ENCODE measurements at regions of chr17 and their contacts with region 1.

Region 1: DNA sequence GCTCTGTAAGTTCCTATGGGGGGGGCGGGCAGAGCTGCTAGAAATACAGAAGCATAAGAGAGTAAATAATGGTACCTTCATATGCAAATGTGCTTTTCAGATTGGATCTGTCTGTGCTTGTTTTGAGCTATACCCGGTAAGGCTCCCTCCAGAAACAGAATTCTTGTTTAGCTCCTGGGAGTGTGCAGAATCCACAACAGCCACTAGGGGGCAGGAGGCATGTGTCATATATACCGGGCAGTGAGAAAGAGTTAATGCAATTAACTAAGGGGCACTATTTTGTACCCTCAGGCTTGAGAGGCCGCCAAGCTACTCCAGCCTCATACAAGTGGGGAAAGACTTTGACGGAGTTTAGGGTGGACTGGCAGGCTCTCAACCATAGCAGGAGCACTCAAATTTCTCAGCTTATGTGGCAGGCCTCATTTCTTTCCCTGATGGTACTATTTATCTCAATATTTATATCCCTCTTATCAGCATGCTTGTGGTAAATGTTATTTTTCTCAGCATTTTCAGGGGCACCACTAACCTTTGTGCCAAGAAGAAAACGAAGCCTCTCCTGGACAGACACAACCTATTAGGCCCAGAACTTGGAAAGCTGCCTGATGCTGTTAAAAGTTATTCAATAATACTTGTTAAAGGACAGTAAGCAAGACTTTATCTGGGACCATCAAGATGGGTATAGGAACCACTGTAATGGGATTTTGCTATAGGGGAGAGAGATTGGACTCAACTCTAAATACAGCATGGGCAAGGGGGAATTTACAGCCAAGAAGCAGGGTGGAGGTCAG is 10.7 kb upstream of the CENPV start:
- DNase-seq: peak; percentile 86
- ATAC-seq: peak; percentile 96
- H3K4me3 Mint-ChIP-seq: no peak overlapping the region
- H3K27ac Mint-ChIP-seq: no peak overlapping the region
- H3K4me1 Mint-ChIP-seq: peaks cover 7% of the 10 kb centered on the region
- H3K27me3 Mint-ChIP-seq: peaks cover 2% of the 10 kb centered on the region

Region 2: DNA sequence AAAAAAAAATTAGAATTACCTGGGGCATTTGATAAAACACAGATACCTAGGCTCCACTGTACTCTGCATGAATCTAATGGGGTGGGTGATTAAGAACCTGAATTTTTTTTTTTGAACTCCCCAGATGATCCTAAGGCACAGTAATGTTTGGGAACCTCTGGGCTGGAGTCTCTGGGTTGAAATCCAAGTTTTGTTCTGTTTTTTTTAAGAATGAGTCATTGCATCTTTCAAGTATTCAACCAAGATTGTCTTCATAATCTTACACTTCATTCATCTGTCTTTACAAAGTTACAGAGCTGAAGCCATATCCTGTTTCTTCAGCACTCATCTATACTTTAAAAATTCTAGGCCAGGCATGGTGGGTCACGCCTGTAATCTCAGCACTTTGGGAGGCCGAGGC is 94.3 kb before region 1 on chr17:
- CTCF ChIA-PET with region 1: no interaction called
- DNase-seq: no peak
- ATAC-seq: no peak
- H3K4me3 Mint-ChIP-seq: no peak overlapping the region
- H3K27ac Mint-ChIP-seq: peak overlapping the region; percentile 18
- H3K4me1 Mint-ChIP-seq: peaks cover 22% of the 10 kb centered on the region
- H3K27me3 Mint-ChIP-seq: no peaks in the 10 kb centered on the region

Region 3: DNA sequence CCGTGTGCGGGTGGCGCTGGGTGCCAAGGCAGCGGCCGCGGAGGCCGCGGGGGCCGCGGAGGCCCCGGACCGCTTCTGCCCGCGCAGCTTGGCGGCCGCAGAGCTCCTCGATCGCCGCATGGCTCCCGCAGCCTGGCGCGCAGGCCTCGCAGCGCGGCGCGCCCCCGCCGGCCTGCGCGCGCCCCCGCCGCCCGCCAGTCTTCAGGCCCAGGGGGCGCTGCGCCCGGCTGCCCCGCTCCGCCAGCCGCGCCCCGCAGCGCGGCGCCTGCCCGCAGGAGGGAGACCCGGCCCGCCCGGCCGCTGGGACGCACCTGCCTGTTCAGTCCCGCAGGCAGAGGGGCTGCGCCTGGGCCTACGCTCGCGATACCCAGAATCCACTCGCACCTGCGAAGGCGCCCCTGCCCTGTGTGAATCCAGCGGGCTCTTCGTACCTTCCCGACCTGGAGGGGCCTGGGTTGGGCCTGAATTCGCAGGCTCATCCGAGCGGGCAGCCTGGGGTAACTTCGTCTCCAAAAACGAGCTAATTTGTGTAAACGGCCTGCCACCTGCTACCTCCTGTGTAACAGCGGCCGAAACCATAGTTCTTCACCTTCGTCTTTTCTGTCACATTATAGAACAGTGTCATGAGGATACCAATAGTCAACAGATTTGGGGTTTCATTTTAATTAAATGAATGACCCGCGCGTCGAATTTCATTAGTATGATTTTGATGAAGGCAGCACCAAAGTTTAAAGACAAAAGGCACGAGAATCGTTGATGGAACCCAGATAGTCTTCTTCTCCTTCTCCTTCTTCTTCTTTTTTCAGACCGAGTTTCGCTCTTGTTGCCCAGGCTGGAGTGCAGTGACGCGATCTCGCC is 10.4 kb before region 1 on chr17 and contains the start of gene CENPV:
- CTCF ChIA-PET with region 1: interaction called, 81 read pairs
- DNase-seq: peak; percentile 64
- ATAC-seq: peak; percentile 90
- H3K4me3 Mint-ChIP-seq: peak within 1 kb of the TSS; percentile 84
- H3K27ac Mint-ChIP-seq: peak within 1 kb of the TSS; percentile 61
- H3K4me1 Mint-ChIP-seq: peaks cover 21% of the 10 kb centered on the region
- H3K27me3 Mint-ChIP-seq: peaks cover 23% of the 10 kb centered on the region
- total RNA-seq, gene CENPV: 17.2 to 20.4 TPM

Region 4: GRCh38 chr17:16374129-16374528 is 10.2 kb after region 1 on chr17:
- CTCF ChIA-PET with region 1: interaction called, 17 read pairs
- DNase-seq: no peak
- ATAC-seq: no peak
- H3K4me3 Mint-ChIP-seq: no peak overlapping the region
- H3K27ac Mint-ChIP-seq: no peak overlapping the region
- H3K4me1 Mint-ChIP-seq: no peaks in the 10 kb centered on the region
- H3K27me3 Mint-ChIP-seq: no peaks in the 10 kb centered on the region

Region 5: DNA sequence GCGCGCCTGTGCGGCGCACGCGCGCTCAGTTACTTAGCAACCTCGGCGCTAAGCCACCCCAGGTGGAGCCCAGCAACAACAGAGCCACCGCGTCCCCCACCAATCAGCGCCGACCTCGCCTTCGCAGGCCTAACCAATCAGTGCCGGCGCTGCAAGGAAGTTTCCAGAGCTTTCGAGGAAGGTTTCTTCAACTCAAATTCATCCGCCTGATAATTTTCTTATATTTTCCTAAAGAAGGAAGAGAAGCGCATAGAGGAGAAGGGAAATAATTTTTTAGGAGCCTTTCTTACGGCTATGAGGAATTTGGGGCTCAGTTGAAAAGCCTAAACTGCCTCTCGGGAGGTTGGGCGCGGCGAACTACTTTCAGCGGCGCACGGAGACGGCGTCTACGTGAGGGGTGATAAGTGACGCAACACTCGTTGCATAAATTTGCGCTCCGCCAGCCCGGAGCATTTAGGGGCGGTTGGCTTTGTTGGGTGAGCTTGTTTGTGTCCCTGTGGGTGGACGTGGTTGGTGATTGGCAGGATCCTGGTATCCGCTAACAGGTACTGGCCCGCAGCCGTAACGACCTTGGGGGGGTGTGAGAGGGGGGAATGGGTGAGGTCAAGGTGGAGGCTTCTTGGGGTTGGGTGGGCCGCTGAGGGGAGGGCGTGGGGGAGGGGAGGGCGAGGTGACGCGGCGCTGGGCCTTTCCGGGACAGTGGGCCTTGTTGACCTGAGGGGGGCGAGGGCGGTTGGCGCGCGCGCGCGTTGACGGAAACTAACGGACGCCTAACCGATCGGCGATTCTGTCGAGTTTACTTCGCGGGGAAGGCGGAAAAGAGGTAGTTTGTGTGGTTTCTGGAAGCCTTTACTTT is 16.9 kb after region 1 on chr17 and contains the start of gene UBB:
- CTCF ChIA-PET with region 1: interaction called, 17 read pairs
- DNase-seq: peak; percentile 98
- ATAC-seq: peak; percentile 92
- H3K4me3 Mint-ChIP-seq: peak within 1 kb of the TSS; percentile 93
- H3K27ac Mint-ChIP-seq: peak within 1 kb of the TSS; percentile 97
- H3K4me1 Mint-ChIP-seq: peaks cover 33% of the 10 kb centered on the region
- H3K27me3 Mint-ChIP-seq: no peaks in the 10 kb centered on the region
- total RNA-seq, gene UBB: 1,297 to 1,567 TPM

Region 6: GRCh38 chr17:16415031-16415924 is 51.3 kb after region 1 on chr17 and contains the start of gene TRPV2:
- CTCF ChIA-PET with region 1: interaction called, 69 read pairs
- DNase-seq: peak; percentile 80
- ATAC-seq: peak; percentile 45
- H3K4me3 Mint-ChIP-seq: peak within 1 kb of the TSS; percentile 98
- H3K27ac Mint-ChIP-seq: peak within 1 kb of the TSS; percentile 99
- H3K4me1 Mint-ChIP-seq: peaks cover 51% of the 10 kb centered on the region
- H3K27me3 Mint-ChIP-seq: no peaks in the 10 kb centered on the region
- total RNA-seq, gene TRPV2: 124 to 129 TPM

Region 7: DNA sequence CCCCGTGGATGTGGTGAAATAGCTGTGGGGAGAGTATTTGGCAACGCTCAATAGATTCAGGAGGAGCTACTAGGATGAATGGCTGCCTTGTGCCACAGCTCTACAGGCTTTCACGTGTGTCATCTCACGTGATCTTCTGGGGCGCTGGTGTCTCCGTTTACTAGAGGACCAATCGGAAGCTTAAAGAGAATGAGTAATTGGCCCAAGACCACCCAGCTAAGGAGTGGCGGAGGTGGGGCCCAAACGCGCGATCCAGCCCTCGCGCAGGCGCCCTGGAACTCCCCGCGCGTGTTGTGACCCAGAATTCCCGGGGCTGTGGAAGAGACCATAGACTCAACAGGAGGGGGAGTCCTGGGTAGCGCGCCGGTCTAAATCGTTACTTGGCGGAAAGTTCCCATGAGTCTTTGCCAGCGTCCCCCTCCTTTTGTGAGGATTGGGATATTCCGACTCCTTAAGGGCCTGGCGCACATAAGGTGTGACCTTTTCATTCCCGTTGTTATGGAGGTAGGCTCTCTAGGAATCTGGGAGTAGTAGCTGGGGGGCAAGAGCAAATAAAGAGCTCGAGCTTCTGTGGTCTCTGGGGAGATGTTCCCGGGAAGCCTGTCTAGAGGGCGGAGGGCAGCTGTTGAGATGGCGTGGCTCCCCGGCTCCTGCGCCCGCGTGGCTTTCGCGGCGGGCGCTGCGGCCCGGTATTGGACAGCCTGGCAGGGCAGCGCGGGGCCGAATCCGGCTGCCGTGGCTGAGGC is 74.8 kb after region 1 on chr17:
- CTCF ChIA-PET with region 1: interaction called, 13 read pairs
- DNase-seq: peak; percentile 98
- ATAC-seq: peak; percentile 88
- H3K4me3 Mint-ChIP-seq: peak overlapping the region; percentile 98
- H3K27ac Mint-ChIP-seq: peak overlapping the region; percentile 98
- H3K4me1 Mint-ChIP-seq: peaks cover 45% of the 10 kb centered on the region
- H3K27me3 Mint-ChIP-seq: no peaks in the 10 kb centered on the region